Activated CD8-positive, alpha-beta T cell treated with anti-CD3 and anti-CD28 coated beads for 36 hours (primary cell): ENCODE measurements at regions of chr5 and their contacts with region 1.

Region 1: DNA sequence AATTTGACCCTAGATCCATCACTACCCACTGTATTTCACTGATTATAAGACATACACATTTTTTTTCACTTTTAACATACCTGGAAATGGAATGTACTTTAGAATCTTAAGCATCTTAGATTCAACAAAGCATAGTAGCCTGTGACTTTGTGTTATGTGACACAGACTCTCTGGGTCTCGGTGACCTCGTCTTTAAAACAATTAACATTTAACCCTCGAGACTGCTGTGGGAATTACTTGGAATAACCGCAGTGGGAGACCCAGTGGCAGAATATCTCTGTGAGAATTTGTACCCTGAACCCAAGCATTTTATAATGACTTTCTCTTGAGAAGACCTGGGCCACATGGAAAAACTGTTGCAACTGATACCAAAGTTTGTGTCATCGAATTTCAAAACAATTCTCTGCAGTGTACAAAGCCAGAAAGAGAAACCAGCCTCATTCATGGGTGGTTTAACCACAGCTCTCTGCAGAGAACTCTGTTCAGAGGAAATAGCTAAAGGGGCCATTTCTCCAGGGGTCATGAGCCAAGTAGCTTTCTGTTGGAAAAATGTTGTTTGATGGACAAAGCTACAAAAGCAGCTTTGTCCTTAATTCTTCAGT is 10.0 kb upstream of the RETREG1 start:
- DNase-seq: peak; percentile 70
- ATAC-seq: peak; percentile 83
- H3K4me3 Mint-ChIP-seq: peak overlapping the region; percentile 54
- H3K27ac Mint-ChIP-seq: peak overlapping the region; percentile 96
- H3K4me1 Mint-ChIP-seq: peaks cover 50% of the 10 kb centered on the region
- H3K27me3 Mint-ChIP-seq: no peaks in the 10 kb centered on the region
- CTCF ChIP-seq: no peak

Region 2: GRCh38 chr5:16418471-16418922 is 208.3 kb before region 1 on chr5:
- CTCF ChIA-PET with region 1: no interaction called
- POLR2A ChIA-PET with region 1: no interaction called
- intact Hi-C with region 1: no loop called
- DNase-seq: no peak
- ATAC-seq: no peak
- H3K4me3 Mint-ChIP-seq: no peak overlapping the region
- H3K27ac Mint-ChIP-seq: no peak overlapping the region
- H3K4me1 Mint-ChIP-seq: no peaks in the 10 kb centered on the region
- H3K27me3 Mint-ChIP-seq: peaks cover 17% of the 10 kb centered on the region
- CTCF ChIP-seq: no peak

Region 3: GRCh38 chr5:16465544-16466466 is 161.0 kb before region 1 on chr5 and contains the start of gene ZNF622:
- CTCF ChIA-PET with region 1: no interaction called
- POLR2A ChIA-PET with region 1: interaction called, 3 read pairs
- intact Hi-C with region 1: loop called (anchors 5 kb)
- DNase-seq: peak; percentile 94
- ATAC-seq: peak; percentile 84
- H3K4me3 Mint-ChIP-seq: peak within 1 kb of the TSS; percentile 97
- H3K27ac Mint-ChIP-seq: peak within 1 kb of the TSS; percentile 96
- H3K4me1 Mint-ChIP-seq: peaks cover 71% of the 10 kb centered on the region
- H3K27me3 Mint-ChIP-seq: no peaks in the 10 kb centered on the region
- CTCF ChIP-seq: no peak
- total RNA-seq, gene ZNF622: 36.7 to 38.4 TPM

Region 4: GRCh38 chr5:16600397-16600796 is 26.4 kb before region 1 on chr5:
- CTCF ChIA-PET with region 1: no interaction called
- POLR2A ChIA-PET with region 1: no interaction called
- intact Hi-C with region 1: no loop called
- DNase-seq: no peak
- ATAC-seq: no peak
- H3K4me3 Mint-ChIP-seq: no peak overlapping the region
- H3K27ac Mint-ChIP-seq: peak overlapping the region; percentile 62
- H3K4me1 Mint-ChIP-seq: peaks cover 70% of the 10 kb centered on the region
- H3K27me3 Mint-ChIP-seq: no peaks in the 10 kb centered on the region
- CTCF ChIP-seq: no peak

Region 5: DNA sequence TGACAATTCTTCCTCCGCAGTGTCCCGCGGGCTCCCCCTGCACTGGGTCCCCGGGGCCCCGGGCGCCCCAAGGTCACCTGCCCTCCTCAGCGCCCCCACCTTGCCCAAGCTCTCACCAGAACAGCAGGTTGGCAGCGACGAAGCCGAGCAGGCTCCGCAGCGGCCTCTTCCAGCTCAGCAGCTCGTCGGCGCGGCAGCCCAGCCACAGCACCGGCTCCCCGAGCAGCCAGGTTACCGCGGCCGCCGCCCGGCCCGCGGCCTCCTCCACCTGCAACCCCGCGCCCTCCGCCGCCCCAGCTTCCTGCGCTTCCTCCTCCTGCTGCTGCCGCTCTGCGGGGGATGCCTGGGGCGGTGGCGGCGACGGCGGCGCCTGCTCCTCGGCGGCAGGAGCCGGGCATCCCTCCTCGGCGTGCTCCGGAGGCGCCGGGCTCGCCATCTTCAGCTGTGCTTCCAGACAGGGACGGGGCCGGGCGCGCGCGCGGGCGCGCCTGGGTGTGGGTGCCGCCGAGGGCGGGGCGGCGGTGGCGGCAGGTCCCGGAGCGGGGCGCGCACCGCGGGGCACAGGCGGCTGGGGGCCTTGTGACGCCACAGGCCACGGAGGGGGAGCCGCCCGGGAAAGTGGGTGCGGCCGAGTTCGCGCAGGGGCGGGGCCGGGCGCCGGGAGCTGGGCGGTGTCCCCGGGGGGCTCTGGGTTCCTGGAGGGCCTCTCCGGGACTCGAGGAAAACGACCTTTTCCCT is 10.1 kb before region 1 on chr5 and contains the start of gene RETREG1:
- CTCF ChIA-PET with region 1: interaction called, 15 read pairs
- POLR2A ChIA-PET with region 1: interaction called, 79 read pairs
- intact Hi-C with region 1: no loop called
- DNase-seq: peak; percentile 82
- ATAC-seq: peak; percentile 80
- H3K4me3 Mint-ChIP-seq: peak within 1 kb of the TSS; percentile 95
- H3K27ac Mint-ChIP-seq: peak within 1 kb of the TSS; percentile 93
- H3K4me1 Mint-ChIP-seq: peaks cover 34% of the 10 kb centered on the region
- H3K27me3 Mint-ChIP-seq: no peaks in the 10 kb centered on the region
- CTCF ChIP-seq: no peak
- total RNA-seq, gene RETREG1: 31.7 to 31.9 TPM

Region 6: DNA sequence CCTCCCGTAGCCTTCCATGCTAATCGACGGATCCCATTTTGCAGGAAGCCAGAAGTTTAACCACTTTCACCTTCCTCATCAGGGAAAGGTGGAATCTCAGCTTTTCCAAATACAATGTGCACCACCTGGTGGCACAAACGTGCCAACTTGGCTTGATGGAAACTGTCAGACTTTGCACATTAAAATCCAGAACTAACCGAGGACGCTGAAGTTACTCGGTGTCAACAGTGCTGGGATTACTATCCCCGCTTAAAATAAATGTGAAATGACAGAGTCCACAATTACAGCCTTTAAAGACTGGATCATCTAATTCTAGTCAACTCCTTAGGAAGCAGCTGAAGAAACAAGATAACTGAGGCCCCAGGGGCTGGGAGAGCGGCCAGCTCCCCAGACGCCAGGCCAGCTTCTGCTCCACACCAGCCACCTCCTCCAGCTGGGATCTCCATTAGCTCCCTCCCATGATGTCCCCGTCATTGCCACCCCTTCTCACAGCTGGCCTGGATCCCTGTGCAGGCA is 40.2 kb after region 1 on chr5:
- CTCF ChIA-PET with region 1: interaction called, 12 read pairs
- POLR2A ChIA-PET with region 1: no interaction called
- intact Hi-C with region 1: no loop called
- DNase-seq: peak; percentile 51
- ATAC-seq: peak; percentile 34
- H3K4me3 Mint-ChIP-seq: no peak overlapping the region
- H3K27ac Mint-ChIP-seq: no peak overlapping the region
- H3K4me1 Mint-ChIP-seq: peaks cover 5% of the 10 kb centered on the region
- H3K27me3 Mint-ChIP-seq: no peaks in the 10 kb centered on the region
- CTCF ChIP-seq: peak; percentile 60